K562 (cell line): ENCODE measurements at regions of chr16 and their contacts with region 1.

Region 1: DNA sequence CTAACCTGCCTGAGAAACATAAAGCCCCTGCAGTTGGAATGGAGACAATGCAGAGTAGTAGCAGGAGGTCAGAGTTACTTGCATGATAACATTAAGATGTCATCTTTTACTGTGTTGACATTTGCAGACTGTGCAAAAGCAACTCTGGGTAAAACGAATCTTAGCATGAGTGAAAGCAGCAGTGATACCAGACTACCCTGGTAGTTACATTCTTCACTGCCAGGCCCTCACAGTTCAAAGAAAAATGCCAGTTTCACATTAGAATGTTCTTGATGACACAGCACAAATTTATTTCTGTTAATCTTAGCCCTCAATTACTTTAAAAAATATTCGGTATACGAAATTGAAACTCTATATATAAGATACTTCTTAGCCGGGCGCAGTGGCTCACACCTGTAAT is 12.2 kb downstream of the MPHOSPH6 start:
- DNase-seq: no peak
- ATAC-seq: peak; percentile 30; the same call in 1 of the 3 replicates
- H3K4me3 ChIP-seq: no peak overlapping the region
- H3K27ac ChIP-seq: no peak overlapping the region
- H3K4me1 ChIP-seq: peaks cover 0 to 5% of the 10 kb centered on the region in 2 experiments; a peak in 3 of 5 replicates
- H3K27me3 ChIP-seq: no peaks in the 10 kb centered on the region
- CTCF ChIP-seq: no peak
- EP300 ChIP-seq: no peak
- POLR2A ChIP-seq: no peak
- RAD21 ChIP-seq: no peak

Region 2: GRCh38 chr16:82169861-82170845 is 12.3 kb after region 1 on chr16 and contains the start of gene MPHOSPH6:
- CTCF ChIA-PET with region 1: no interaction called
- POLR2A ChIA-PET with region 1: interaction called, 14 read pairs
- in situ Hi-C with region 1: no loop called
- intact Hi-C with region 1: no loop called
- DNase-seq: peak; percentile 96 to 98 (median 96)
- ATAC-seq: peak; percentile 99
- H3K4me3 ChIP-seq: peak within 1 kb of the TSS; percentile 58
- H3K27ac ChIP-seq: peak within 1 kb of the TSS; percentile 67
- H3K4me1 ChIP-seq: peaks cover 5 to 9% of the 10 kb centered on the region in 2 experiments; a peak in 4 of 5 replicates
- H3K27me3 ChIP-seq: peaks cover 15 to 19% of the 10 kb centered on the region in 2 experiments; a peak in 4 of 5 replicates
- CTCF ChIP-seq: no peak
- EP300 ChIP-seq: no peak
- POLR2A ChIP-seq: peak; percentile 92
- RAD21 ChIP-seq: no peak
- polyA plus RNA-seq, gene MPHOSPH6: 148 to 153 TPM